Activated CD4-positive, alpha-beta T cell treated with anti-CD3 and anti-CD28 coated beads, Interleukin-2, amount 10 ng/mL, durations not matched to agents 24 days and 14 days (primary cell): ENCODE measurements at regions of chr15 and their contacts with region 1.

Region 1: GRCh38 chr15:50260969-50261496 is 4.5 kb downstream of the HDC start:
- DNase-seq: peak; percentile 61
- H3K4me3 Mint-ChIP-seq: peak overlapping the region; percentile 71
- H3K27ac Mint-ChIP-seq: peak overlapping the region; percentile 95
- H3K4me1 Mint-ChIP-seq: peaks cover 68% of the 10 kb centered on the region
- H3K27me3 Mint-ChIP-seq: no peaks in the 10 kb centered on the region

Region 2: GRCh38 chr15:48925714-48926223 is 1335.3 kb before region 1 on chr15:
- intact Hi-C with region 1: loop called (anchors 5 kb)
- DNase-seq: peak; percentile 70
- H3K4me3 Mint-ChIP-seq: peak overlapping the region; percentile 46
- H3K27ac Mint-ChIP-seq: peak overlapping the region; percentile 97
- H3K4me1 Mint-ChIP-seq: peaks cover 61% of the 10 kb centered on the region
- H3K27me3 Mint-ChIP-seq: peaks cover 2% of the 10 kb centered on the region

Region 3: GRCh38 chr15:49674370-49674769 is 586.7 kb before region 1 on chr15:
- intact Hi-C with region 1: no loop called
- DNase-seq: no peak
- H3K4me3 Mint-ChIP-seq: no peak overlapping the region
- H3K27ac Mint-ChIP-seq: no peak overlapping the region
- H3K4me1 Mint-ChIP-seq: no peaks in the 10 kb centered on the region
- H3K27me3 Mint-ChIP-seq: peaks cover 24% of the 10 kb centered on the region

Region 4: DNA sequence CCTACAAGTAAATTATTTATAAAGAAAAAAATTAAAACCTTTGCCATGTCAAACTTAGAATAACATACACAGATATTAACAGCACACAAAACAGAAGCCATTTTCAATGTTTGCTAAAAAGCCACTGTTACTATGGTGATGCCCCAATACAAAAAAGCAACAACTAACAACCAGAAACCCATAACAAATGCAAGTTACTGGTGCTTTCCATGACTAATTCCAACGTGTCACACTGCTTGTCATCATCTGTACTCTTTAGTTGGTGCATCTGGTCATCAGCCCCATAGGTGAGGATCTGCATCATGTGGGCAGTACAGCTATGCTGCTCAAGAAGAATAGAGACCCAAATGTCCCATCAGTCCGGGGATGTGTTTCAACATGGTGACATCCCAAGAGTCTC is 194.8 kb before region 1 on chr15:
- intact Hi-C with region 1: loop called (anchors 5 kb)
- DNase-seq: peak; percentile 80
- H3K4me3 Mint-ChIP-seq: peak overlapping the region; percentile 27
- H3K27ac Mint-ChIP-seq: peak overlapping the region; percentile 91
- H3K4me1 Mint-ChIP-seq: peaks cover 38% of the 10 kb centered on the region
- H3K27me3 Mint-ChIP-seq: no peaks in the 10 kb centered on the region

Region 5: GRCh38 chr15:50182219-50183013 is 78.6 kb before region 1 on chr15:
- intact Hi-C with region 1: loop called (anchors 1 kb)
- DNase-seq: peak; percentile 87
- H3K4me3 Mint-ChIP-seq: peak overlapping the region; percentile 98
- H3K27ac Mint-ChIP-seq: peak overlapping the region; percentile 87
- H3K4me1 Mint-ChIP-seq: peaks cover 51% of the 10 kb centered on the region
- H3K27me3 Mint-ChIP-seq: no peaks in the 10 kb centered on the region

Region 6: GRCh38 chr15:50278496-50278895 is 17.5 kb after region 1 on chr15:
- intact Hi-C with region 1: loop called (anchors 1 kb)
- DNase-seq: no peak
- H3K4me3 Mint-ChIP-seq: no peak overlapping the region
- H3K27ac Mint-ChIP-seq: no peak overlapping the region
- H3K4me1 Mint-ChIP-seq: peaks cover 15% of the 10 kb centered on the region
- H3K27me3 Mint-ChIP-seq: no peaks in the 10 kb centered on the region

Region 7: GRCh38 chr15:50304836-50305539 is 44.0 kb after region 1 on chr15:
- intact Hi-C with region 1: no loop called
- DNase-seq: peak; percentile 29
- H3K4me3 Mint-ChIP-seq: no peak overlapping the region
- H3K27ac Mint-ChIP-seq: no peak overlapping the region
- H3K4me1 Mint-ChIP-seq: no peaks in the 10 kb centered on the region
- H3K27me3 Mint-ChIP-seq: no peaks in the 10 kb centered on the region

Region 8: GRCh38 chr15:50377867-50378751 is 117.1 kb after region 1 on chr15:
- intact Hi-C with region 1: loop called (anchors 1 kb)
- DNase-seq: no peak
- H3K4me3 Mint-ChIP-seq: peak overlapping the region; percentile 7
- H3K27ac Mint-ChIP-seq: peak overlapping the region; percentile 88
- H3K4me1 Mint-ChIP-seq: peaks cover 13% of the 10 kb centered on the region
- H3K27me3 Mint-ChIP-seq: no peaks in the 10 kb centered on the region

Region 9: DNA sequence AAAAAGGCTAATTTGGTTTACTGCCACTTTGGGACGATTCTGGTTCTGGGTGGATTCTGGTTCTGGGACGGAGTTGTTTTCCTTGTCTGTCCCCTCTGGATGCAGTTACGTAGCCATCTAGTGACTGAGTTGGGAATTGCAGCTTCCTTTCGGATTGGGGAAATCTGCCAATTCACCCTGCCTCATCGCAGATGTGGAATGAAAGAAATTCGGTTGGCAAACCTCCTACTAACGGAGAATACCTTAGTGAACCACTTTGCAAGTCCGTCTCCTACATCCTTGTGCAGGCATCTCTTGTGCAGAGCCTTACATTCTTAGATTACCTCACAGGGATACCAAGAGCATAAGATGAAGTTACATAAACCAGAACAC is 615.9 kb after region 1 on chr15:
- intact Hi-C with region 1: loop called (anchors 5 kb)
- DNase-seq: peak; percentile 93
- H3K4me3 Mint-ChIP-seq: peak overlapping the region; percentile 81
- H3K27ac Mint-ChIP-seq: peak overlapping the region; percentile 11
- H3K4me1 Mint-ChIP-seq: peaks cover 48% of the 10 kb centered on the region
- H3K27me3 Mint-ChIP-seq: peaks cover 13% of the 10 kb centered on the region